ENCODE measurements at regions of chr1 and their contacts with region 1.

Region 1: GRCh38 chr1:19596714-19597495 is 47.2 kb upstream of the NBL1 start:
- DNase-seq: peak; percentile 90 to 99 (median 98)
- ATAC-seq: peak; percentile 71 to 73
- H3K4me3 Mint-ChIP-seq: peak overlapping the region; percentile 89 to 100 (median 98)
- H3K27ac Mint-ChIP-seq: peak overlapping the region; percentile 99 to 100 (median 100)
- H3K4me1 Mint-ChIP-seq: peaks cover 29 to 55% (median 49%) of the 10 kb centered on the region in 4 donors
- H3K27me3 Mint-ChIP-seq: peaks cover 0 to 2% (median 0%) of the 10 kb centered on the region in 5 donors

Region 2: DNA sequence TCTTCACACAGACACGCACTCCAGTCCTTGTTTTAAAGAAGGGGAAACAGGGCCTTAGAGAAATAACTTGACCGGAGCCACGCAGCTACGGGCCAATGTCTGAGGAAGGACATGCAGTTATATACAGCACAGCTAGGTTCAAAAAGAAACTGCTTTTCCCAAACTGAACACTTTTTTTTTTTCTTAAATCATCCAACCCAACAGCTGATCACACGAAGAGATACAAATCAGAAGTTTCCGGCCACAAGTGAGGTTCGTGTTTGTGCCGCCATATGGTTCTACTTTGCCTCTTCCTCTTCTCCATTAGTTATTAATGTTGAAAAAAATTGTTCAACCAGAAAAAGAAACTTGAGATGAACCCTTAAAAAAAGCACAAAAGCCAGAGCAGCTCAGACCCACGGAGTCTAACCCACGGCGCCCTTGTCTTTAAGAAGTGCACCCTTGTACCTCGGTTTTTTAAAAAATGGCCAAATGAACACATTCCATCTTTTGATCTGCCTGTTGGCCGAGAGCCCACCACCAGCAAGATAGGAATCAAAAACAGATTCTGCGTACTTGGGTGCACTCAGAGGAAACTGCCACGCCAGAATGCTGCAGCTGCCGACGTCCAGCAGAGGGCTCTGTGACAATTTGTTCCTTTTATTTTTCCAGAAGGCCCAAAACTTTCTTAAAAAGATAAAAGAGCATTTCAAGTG is 205.9 kb before region 1 on chr1:
- POLR2A ChIA-PET with region 1: interaction called, 10 read pairs
- DNase-seq: peak; percentile 40 to 81 (median 74)
- ATAC-seq: peak; percentile 74 to 84
- H3K4me3 Mint-ChIP-seq: peak overlapping the region; percentile 76 to 92 (median 84)
- H3K27ac Mint-ChIP-seq: peak overlapping the region; percentile 91 to 95 (median 94)
- H3K4me1 Mint-ChIP-seq: peaks cover 34 to 90% (median 86%) of the 10 kb centered on the region in 4 donors
- H3K27me3 Mint-ChIP-seq: no peaks in the 10 kb centered on the region

Region 3: GRCh38 chr1:19405761-19406487 is 191.0 kb before region 1 on chr1:
- POLR2A ChIA-PET with region 1: no interaction called
- DNase-seq: peak in 5 of 10 donors; percentile 50 to 68 (median 56)
- ATAC-seq: peak; percentile 75 to 94
- H3K4me3 Mint-ChIP-seq: peak overlapping the region in 9 of 10 donors; percentile 8 to 69 (median 63)
- H3K27ac Mint-ChIP-seq: peak overlapping the region; percentile 74 to 94 (median 84)
- H3K4me1 Mint-ChIP-seq: peaks cover 48 to 97% (median 85%) of the 10 kb centered on the region in 4 donors
- H3K27me3 Mint-ChIP-seq: no peaks in the 10 kb centered on the region

Region 4: GRCh38 chr1:19462781-19463503 is 134.0 kb before region 1 on chr1:
- POLR2A ChIA-PET with region 1: interaction called, 23 read pairs
- DNase-seq: peak; percentile 44 to 89 (median 74)
- ATAC-seq: peak; percentile 83 to 86
- H3K4me3 Mint-ChIP-seq: peak overlapping the region; percentile 68 to 90 (median 84)
- H3K27ac Mint-ChIP-seq: peak overlapping the region; percentile 92 to 98 (median 96)
- H3K4me1 Mint-ChIP-seq: peaks cover 35 to 95% (median 90%) of the 10 kb centered on the region in 4 donors
- H3K27me3 Mint-ChIP-seq: no peaks in the 10 kb centered on the region

Region 5: DNA sequence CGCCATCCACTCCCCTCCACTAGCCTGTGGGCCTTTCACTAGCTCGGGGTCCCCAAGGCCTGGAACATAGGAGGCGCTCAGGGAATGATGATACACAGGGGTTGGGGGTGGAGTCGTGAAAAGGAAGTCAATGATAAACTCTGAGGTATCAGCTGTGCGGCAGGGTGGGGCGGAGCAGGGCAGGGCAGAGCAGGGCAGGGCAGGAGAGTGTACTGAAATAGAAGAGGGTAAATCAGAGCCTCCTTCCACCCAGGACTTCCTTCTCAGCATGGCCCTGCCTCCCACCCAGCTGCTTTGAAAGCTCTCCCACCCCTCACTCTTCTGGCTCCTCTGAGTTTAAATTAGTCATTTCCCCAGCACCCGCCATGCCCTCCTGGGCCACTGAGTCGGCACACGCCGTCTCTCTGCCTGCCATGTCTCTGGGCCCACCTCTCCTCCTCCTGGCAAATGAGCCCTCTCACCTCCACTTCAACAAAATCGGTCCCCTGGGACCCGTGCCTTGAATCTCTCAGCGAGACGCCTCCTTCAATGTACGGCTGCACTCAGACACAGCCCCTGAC is 128.4 kb before region 1 on chr1:
- POLR2A ChIA-PET with region 1: interaction called, 23 read pairs
- DNase-seq: peak; percentile 54 to 87 (median 64)
- ATAC-seq: peak; percentile 78 to 88
- H3K4me3 Mint-ChIP-seq: peak overlapping the region; percentile 66 to 93 (median 82)
- H3K27ac Mint-ChIP-seq: peak overlapping the region; percentile 93 to 97 (median 96)
- H3K4me1 Mint-ChIP-seq: peaks cover 44 to 97% (median 93%) of the 10 kb centered on the region in 4 donors
- H3K27me3 Mint-ChIP-seq: no peaks in the 10 kb centered on the region

Region 6: GRCh38 chr1:19485362-19486187 is 111.3 kb before region 1 on chr1 and contains the start of gene CAPZB:
- POLR2A ChIA-PET with region 1: interaction called, 67 read pairs
- DNase-seq: peak; percentile 87 to 98 (median 92)
- ATAC-seq: peak; percentile 84 to 86
- H3K4me3 Mint-ChIP-seq: peak within 1 kb of the TSS; percentile 89 to 96 (median 94)
- H3K27ac Mint-ChIP-seq: peak within 1 kb of the TSS; percentile 95 to 98 (median 97)
- H3K4me1 Mint-ChIP-seq: peaks cover 40 to 80% (median 68%) of the 10 kb centered on the region in 4 donors
- H3K27me3 Mint-ChIP-seq: no peaks in the 10 kb centered on the region
- polyA plus RNA-seq, gene CAPZB: 475 to 592 (median 562) TPM

Region 7: DNA sequence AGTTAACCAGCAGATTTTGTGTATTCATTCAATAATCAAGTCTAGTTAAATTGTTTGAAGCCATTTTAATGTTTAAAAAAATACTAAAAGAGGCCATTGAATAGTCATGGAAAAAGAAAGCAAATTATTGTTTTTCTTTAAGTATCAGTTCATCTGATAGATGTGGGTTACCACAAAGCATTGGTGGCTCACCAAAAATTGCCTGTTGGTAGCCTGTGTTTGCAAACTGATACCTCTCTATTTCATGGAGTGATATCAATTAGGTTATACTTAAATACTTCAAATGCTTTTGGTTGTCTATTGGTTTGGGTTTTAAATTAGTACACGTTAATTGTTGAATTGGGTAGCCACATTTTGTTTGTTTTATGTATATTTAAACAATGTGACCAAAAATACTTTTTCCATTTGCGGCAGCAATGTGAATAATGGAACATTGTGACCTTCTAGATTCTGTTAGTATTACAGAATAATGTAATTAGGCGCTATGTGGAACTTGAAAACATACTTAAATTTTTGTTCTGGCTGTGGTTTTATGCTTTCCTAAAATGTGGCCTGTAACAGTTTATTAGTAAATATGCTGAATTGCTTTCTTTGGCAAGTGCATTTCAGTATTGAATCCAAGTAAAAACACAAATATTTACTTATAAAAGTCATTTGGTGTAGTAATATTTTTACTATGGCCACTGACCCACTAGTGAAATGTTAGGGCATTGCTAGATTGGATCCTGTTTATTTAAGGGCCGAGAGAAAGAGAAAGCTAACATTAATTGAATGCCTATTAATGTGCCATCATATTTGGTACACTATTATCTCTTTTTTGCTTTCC is 10.1 kb after region 1 on chr1:
- POLR2A ChIA-PET with region 1: interaction called, 11 read pairs
- DNase-seq: peak in 9 of 10 donors; percentile 11 to 72 (median 51)
- ATAC-seq: peak; percentile 81 to 86
- H3K4me3 Mint-ChIP-seq: peak overlapping the region; percentile 12 to 80 (median 50)
- H3K27ac Mint-ChIP-seq: peak overlapping the region; percentile 3 to 85 (median 66)
- H3K4me1 Mint-ChIP-seq: peaks cover 22 to 73% (median 64%) of the 10 kb centered on the region in 4 donors
- H3K27me3 Mint-ChIP-seq: no peaks in the 10 kb centered on the region

Region 8: DNA sequence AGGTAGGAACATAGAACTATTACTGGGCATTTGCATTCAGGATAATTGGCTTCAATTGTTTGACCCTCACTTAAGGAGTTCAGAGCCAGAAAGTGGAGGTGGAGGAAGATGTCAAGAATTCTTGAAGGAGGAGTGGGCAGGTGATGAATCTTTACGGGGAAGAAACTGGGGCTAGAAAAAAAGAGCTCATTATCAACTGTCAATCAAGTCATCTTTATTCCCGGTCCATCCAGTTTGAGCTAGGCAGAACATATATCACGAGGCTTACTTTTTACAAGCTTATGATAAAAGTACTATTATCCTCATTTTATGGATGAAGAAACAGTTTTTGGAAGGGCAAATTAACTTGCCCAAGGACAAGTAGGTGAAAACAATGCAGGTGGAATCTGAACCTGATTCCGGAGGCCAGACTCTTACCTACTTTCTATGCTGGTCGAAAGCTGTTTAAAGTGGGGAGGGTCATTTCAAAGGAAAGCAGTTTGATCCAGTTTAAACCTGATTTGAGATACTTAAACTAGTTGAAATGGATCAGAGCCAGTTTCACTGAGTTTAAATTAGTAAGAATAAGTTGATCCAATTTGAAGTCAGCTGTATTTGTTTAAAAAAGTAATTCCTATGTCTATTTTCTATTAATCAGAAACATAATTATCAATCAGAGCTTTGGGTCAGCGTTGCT is 34.0 kb after region 1 on chr1:
- POLR2A ChIA-PET with region 1: no interaction called
- DNase-seq: no peak
- ATAC-seq: no peak
- H3K4me3 Mint-ChIP-seq: no peak overlapping the region
- H3K27ac Mint-ChIP-seq: peak overlapping the region in 2 of 10 donors; percentile 7 to 20
- H3K4me1 Mint-ChIP-seq: no peaks in the 10 kb centered on the region
- H3K27me3 Mint-ChIP-seq: no peaks in the 10 kb centered on the region

Region 9: DNA sequence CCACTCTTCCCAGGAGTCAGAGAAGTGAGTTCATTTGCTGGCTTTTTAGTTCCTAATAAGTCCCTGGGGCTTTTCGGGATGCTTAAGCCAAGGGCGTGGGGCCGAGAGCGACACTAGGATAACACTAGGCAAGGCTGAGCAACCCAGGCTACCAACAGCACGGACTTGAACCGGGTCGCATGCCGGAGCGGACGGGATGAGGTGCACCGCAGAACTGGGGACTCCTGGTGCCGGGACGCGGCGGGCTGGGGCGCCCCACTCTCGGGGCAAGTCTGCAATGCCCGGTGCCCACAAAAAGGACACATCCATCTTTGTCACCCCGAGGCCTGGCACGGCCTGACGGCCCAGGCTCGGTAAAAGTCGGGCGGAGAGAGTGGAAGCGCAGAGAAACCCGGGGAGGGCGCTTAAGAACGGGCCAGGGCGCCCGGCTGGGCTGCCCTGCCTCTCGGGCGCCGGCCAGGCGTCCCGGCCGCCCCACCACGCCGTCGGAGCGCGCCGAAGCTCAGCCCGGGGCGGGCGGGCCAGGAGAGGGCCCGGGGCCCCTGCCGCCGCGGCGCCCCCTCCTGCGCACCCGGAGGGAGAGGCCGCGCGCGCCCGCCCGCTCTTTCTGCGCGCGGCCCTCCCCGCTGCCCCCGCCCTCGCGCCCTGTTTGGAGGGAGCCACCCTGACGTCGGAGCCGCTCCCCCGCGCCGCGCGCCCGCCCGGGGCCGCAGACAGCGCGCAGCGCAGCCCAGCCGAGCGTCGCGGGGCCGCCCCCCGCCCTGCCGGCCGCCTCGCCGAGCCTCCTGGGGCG is 46.9 kb after region 1 on chr1 and contains the start of gene NBL1:
- POLR2A ChIA-PET with region 1: interaction called, 59 read pairs
- DNase-seq: peak; percentile 54 to 87 (median 78)
- ATAC-seq: peak; percentile 85 to 86
- H3K4me3 Mint-ChIP-seq: peak within 1 kb of the TSS; percentile 93 to 99 (median 96)
- H3K27ac Mint-ChIP-seq: peak within 1 kb of the TSS; percentile 76 to 98 (median 94)
- H3K4me1 Mint-ChIP-seq: peaks cover 14 to 35% (median 33%) of the 10 kb centered on the region in 4 donors
- H3K27me3 Mint-ChIP-seq: peaks cover 0 to 18% (median 0%) of the 10 kb centered on the region in 5 donors
- polyA plus RNA-seq, gene NBL1: 7.7 to 14.0 (median 8.6) TPM

Region 10: DNA sequence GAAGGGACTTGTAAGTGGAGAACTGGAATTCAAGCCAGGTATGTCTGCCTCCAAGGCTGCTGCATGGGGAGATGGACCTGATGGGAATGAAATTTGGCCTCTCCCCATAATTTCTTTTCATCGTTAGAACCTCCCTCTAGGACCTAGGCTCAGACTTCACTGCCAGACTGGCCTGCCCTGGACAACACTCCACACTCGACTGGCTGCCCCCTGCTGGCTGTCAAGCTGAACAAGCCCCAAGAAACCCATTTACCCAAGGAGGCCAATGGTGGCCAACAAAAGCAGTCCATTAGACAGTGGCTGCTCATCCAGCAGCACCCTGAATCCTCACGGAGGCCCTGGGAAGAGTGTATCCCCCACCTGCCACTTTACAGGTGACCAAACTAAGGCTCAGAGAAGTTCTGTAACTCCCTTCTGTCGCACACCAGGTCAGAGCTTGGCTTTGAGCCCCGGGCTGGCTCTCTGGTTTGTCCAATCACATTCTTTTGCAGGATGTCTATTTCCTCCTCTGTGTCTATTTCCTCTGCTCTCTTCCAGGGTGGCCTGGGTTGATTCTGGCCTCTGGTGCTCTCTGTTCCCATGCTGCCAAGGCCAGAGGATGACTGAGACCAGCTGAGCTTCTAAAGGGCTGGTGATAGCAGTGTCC is 214.4 kb after region 1 on chr1:
- POLR2A ChIA-PET with region 1: no interaction called
- DNase-seq: peak in 6 of 10 donors; percentile 7 to 29 (median 20)
- ATAC-seq: peak in 1 of 2 donors; percentile 41
- H3K4me3 Mint-ChIP-seq: no peak overlapping the region
- H3K27ac Mint-ChIP-seq: peak overlapping the region in 1 of 10 donors; percentile 34
- H3K4me1 Mint-ChIP-seq: peaks cover 0 to 1% (median 0%) of the 10 kb centered on the region in 4 donors
- H3K27me3 Mint-ChIP-seq: peaks cover 0 to 3% (median 2%) of the 10 kb centered on the region in 5 donors